ENCODE measurements at regions of chr5 and their contacts with region 1.

Region 1: GRCh38 chr5:139787568-139788293 is 7.9 kb upstream of the PSD2 start:
- DNase-seq: peak; percentile 58 to 93
- H3K4me3 ChIP-seq: peak overlapping the region; percentile 59 to 72
- H3K27ac ChIP-seq: peak overlapping the region; percentile 81 to 88
- H3K4me1 ChIP-seq: peaks cover 0 to 10% of the 10 kb centered on the region in 2 donors
- H3K27me3 ChIP-seq: no peaks in the 10 kb centered on the region
- CTCF ChIP-seq: peak; percentile 95 to 97 (median 97)

Region 2: GRCh38 chr5:139560752-139561654 is 226.7 kb before region 1 on chr5 and contains the start of gene UBE2D2:
- intact Hi-C with region 1: no loop called
- DNase-seq: peak; percentile 78 to 98
- H3K4me3 ChIP-seq: peak within 1 kb of the TSS; percentile 86 to 91
- H3K27ac ChIP-seq: peak within 1 kb of the TSS; percentile 96 to 99
- H3K4me1 ChIP-seq: peaks cover 14 to 38% of the 10 kb centered on the region in 2 donors
- H3K27me3 ChIP-seq: no peaks in the 10 kb centered on the region
- CTCF ChIP-seq: no peak
- total RNA-seq, gene UBE2D2: 65.9 TPM

Region 3: GRCh38 chr5:139844472-139845145 is 56.9 kb after region 1 on chr5:
- intact Hi-C with region 1: loop called (anchors 1 kb)
- DNase-seq: peak in 1 of 2 donors; percentile 86
- H3K4me3 ChIP-seq: no peak overlapping the region
- H3K27ac ChIP-seq: no peak overlapping the region
- H3K4me1 ChIP-seq: peaks cover 0 to 11% of the 10 kb centered on the region in 2 donors
- H3K27me3 ChIP-seq: no peaks in the 10 kb centered on the region
- CTCF ChIP-seq: peak; percentile 49 to 75 (median 56)

Region 4: DNA sequence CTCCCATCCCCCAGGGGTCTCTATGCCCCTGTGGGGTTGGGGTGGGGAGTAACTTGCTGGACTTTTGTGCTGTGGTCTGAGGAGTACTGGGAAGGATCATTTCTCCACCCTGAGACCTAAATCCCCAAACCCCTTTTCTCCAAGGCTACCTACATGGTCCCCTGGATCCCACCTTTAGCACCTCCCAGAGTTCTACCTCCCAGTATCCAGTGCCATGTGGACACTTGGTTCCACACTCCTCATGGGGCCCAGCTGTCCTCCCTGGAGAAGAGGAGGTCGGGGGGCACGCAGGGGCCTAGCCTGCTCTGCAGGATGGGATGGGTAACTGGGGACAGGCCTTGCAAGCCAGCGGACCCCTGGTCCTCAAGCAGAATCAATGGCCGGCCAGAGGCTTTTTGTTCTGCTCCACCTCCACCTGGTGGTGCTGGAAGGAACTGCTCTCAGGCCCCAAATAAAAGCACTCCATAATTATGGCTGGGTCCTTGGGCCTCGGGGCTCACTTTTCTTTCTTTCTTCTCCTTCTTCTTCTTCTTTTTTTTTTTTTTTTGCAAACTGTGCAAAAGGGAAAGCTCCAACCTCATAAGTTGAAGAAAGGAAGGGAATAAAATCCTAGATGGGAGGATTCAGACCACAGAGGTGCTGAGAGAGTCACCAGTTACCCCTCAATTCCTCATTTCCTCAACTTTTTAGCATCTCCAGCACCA is 76.3 kb after region 1 on chr5:
- intact Hi-C with region 1: loop called (anchors 1 kb)
- DNase-seq: peak in 1 of 2 donors; percentile 79
- H3K4me3 ChIP-seq: no peak overlapping the region
- H3K27ac ChIP-seq: no peak overlapping the region
- H3K4me1 ChIP-seq: no peaks in the 10 kb centered on the region
- H3K27me3 ChIP-seq: no peaks in the 10 kb centered on the region
- CTCF ChIP-seq: peak; percentile 75 to 95 (median 95)

Region 5: DNA sequence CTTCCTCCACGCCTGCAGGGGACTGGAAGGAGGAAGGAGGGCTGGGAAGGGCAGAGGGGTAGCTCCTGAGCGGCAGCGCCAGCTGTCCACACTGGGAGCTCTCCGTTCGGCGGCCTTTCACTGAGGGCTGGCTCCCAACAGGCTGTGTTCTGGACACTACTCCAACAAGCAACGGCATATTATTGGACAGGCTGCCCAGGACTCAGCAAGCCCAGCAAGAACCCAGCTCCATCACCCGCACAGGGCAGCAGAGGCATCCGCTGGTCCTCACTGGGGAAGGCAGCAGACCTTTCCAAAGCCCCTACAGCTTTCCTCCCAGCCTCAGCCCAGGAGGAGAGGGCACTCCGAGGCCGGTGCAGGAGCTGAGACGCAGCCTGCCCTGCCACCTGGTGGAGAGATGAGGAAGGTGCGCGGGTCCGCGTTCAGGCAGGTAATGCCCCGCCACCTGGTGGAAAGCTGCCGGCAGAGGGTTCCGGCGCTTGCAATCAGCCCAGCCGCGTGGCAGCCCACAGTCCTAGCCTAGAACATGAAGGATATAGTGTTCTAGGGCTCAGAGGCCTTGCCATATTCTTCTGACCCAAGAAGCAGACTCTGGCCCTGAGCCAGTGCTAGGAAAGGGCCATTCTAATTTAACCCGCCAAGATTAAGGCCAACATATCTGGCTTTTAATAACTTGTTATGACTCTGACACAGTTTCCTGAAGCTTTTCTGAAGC is 181.0 kb after region 1 on chr5:
- intact Hi-C with region 1: loop called (anchors 1 kb)
- DNase-seq: peak; percentile 25 to 90
- H3K4me3 ChIP-seq: peak overlapping the region in 1 of 2 donors; percentile 14
- H3K27ac ChIP-seq: no peak overlapping the region
- H3K4me1 ChIP-seq: peaks cover 0 to 7% of the 10 kb centered on the region in 2 donors
- H3K27me3 ChIP-seq: no peaks in the 10 kb centered on the region
- CTCF ChIP-seq: peak; percentile 96 to 99 (median 98)

Region 6: GRCh38 chr5:140157032-140157803 is 369.5 kb after region 1 on chr5:
- intact Hi-C with region 1: loop called (anchors 5 kb)
- DNase-seq: peak; percentile 39 to 93
- H3K4me3 ChIP-seq: peak overlapping the region; percentile 47 to 51
- H3K27ac ChIP-seq: no peak overlapping the region
- H3K4me1 ChIP-seq: peaks cover 0 to 14% of the 10 kb centered on the region in 2 donors
- H3K27me3 ChIP-seq: peaks cover 3% of the 10 kb centered on the region
- CTCF ChIP-seq: peak; percentile 90 to 92 (median 91)